GM23248 (cell line): ENCODE measurements at regions of chr7 and their contacts with region 1.

Region 1: DNA sequence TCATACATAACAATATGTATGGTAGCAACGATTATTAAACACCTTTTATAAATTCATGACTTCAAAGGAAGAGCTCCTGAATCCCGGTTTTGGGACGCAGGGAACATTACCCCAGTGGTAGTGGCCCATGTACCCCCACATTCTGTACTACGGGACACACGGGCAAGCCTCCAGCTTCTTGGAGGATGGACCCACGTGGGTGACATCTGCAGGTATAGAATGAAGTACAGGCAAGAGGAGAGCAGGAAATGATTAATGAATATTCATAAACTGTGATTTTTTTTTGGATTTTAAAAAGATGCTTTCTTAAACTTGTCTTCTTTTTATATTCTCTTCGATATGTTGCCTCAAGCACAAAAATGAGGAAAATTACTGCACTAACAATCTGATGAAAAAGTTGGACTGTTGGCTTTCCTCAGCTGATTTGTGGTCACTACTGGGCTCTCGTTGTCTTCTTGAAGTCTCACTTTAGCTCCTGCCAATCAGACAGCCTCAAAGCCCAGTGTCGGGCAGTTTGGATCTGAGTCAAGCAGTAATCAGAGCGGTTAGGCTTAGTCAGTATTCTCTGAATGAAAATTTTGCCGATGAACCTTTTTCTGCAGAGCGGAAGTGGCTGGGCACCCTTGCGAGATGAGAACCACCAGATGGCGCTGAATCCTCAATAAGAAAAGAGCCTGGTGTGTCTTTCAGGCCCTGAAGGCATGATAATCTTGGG is 157.7 kb upstream of the CDCA7L start:
- DNase-seq: peak; percentile 94
- H3K4me3 ChIP-seq: peak overlapping the region; percentile 61
- H3K27ac ChIP-seq: no peak overlapping the region
- H3K4me1 ChIP-seq: no peaks in the 10 kb centered on the region
- H3K27me3 ChIP-seq: no peaks in the 10 kb centered on the region; the same call in 1 of the 2 replicates

Region 2: GRCh38 chr7:22295402-22296264 is 192.2 kb after region 1 on chr7:
- in situ Hi-C with region 1: loop called (anchors 25 kb)
- DNase-seq: peak; percentile 53
- H3K4me3 ChIP-seq: no peak overlapping the region
- H3K27ac ChIP-seq: no peak overlapping the region
- H3K4me1 ChIP-seq: no peaks in the 10 kb centered on the region
- H3K27me3 ChIP-seq: no peaks in the 10 kb centered on the region